Left cardiac atrium (tissue), 4 donors: ENCODE measurements at regions of chr22 and their contacts with region 1.

Region 1: DNA sequence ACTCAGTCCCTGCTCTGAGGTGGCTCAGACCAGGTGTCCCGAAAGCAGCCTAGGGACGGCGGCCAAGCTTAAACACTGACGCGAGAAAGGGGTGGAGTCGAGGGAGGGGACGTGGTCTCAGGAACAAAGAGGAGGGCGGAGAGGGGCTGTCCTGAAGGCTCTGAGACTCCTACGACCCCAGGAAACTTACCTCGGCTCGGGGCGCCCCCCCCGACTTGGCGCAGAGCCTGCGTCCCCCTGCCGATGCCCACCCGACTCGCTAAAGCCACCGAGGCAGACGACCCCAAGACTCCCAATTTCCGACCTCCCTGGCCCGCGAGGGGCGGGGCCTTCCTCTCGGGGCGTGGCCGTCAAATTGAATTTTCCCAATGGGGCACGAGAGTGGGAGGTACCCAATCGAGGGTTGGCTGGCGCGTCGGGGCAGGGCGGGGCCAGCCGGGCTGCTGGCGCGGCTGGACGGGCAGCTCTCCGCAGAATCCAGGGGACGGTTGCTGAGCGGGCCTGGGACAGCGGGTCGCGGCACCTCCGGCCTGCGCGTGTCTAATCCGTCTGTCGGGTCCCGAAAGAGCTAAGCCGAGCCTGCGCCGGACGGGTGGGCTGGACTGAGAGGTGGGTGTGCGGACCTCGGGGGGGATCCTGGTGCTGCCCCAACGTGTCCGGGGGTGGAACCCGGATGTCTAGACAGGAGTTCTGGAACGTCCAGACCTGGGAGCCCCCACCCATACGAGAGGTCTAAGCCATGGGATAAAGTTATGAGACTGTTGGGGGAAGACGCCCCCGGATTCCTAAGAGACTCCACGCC is at the start of gene SMTN:
- DNase-seq: peak; percentile 94
- ATAC-seq: peak; percentile 81 to 83
- total RNA-seq, gene SMTN: 142 to 150 TPM

Region 2: DNA sequence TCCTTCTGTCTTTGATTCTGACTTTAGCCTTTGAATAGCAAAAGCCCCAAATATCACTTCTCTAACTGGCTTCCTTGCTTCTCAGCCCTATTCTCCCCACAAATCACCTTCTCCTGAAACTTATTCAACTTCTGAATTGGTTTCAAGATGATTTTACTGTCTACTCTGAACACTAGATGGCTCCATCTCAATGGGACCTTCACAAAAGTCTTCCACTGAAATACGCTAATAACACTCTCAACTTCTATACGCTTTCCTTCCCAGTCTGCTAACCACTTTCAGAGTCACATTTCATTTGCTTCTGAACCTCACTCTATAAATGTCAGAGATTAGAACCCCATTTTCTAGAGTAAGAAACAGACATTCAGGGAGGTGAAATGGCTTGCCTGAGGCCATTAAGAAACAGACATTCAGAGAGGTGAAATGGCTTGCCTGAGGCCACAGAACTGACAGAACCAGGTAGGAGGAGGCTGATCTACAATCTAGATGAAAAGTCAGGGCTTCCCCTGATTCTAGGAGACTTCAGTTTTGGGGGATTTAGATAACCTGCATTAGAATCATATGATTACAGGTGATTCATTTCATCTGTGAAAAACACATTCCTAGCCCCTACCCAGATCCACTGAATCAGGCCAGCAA is 133.1 kb before region 1 on chr22:
- intact Hi-C with region 1: loop called (anchors 2 to 5 kb)
- DNase-seq: no peak
- ATAC-seq: peak; percentile 56 to 64

Region 3: GRCh38 chr22:30968924-30969539 is 112.0 kb before region 1 on chr22 and contains the start of gene TUG1:
- intact Hi-C with region 1: loop called (anchors 5 kb)
- DNase-seq: peak; percentile 99
- ATAC-seq: peak; percentile 99
- total RNA-seq, gene TUG1: 37.7 to 51.3 TPM

Region 4: GRCh38 chr22:31046539-31047226 is 34.4 kb before region 1 on chr22:
- intact Hi-C with region 1: loop called in 1 of 2 experiments (anchors 5 kb)
- DNase-seq: peak; percentile 76
- ATAC-seq: peak; percentile 84 to 92

Region 5: GRCh38 chr22:31148953-31149627 is 68.0 kb after region 1 on chr22:
- intact Hi-C with region 1: loop called in 1 of 2 experiments (anchors 10 kb)
- DNase-seq: peak; percentile 82
- ATAC-seq: peak; percentile 97